CD8-positive, alpha-beta T cell (primary cell): ENCODE measurements at regions of chr22 and their contacts with region 1.

Region 1: GRCh38 chr22:22349455-22349836 is 104.9 kb downstream of the VPREB1 start:
- DNase-seq: no peak
- ATAC-seq: no peak
- H3K4me3 ChIP-seq: no peak overlapping the region
- H3K4me3 Mint-ChIP-seq: no peak overlapping the region
- H3K27ac ChIP-seq: no peak overlapping the region
- H3K27ac Mint-ChIP-seq: no peak overlapping the region
- H3K4me1 ChIP-seq: no peaks in the 10 kb centered on the region
- H3K4me1 Mint-ChIP-seq: no peaks in the 10 kb centered on the region
- H3K27me3 ChIP-seq: no peaks in the 10 kb centered on the region
- H3K27me3 Mint-ChIP-seq: peaks cover 19% of the 10 kb centered on the region
- CTCF ChIP-seq: no peak

Region 2: DNA sequence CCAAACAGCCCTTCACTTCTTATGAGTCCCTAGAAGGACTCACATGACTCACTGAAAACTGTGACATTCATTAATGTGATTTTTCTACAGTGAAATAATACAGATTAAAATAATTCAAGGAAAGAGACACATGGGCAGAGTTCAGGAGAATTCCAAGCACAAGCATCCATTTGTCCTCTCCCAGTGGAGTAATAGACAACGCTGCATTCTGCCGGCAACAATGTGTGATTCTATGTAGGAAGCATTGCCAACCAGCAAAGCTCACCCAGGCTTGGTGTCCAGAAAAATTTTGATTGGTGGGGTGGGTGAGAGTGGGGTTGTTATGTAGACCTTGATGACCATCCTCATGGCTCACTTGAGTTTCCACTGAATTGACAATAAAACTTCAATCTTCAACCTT is 19.1 kb after region 1 on chr22:
- CTCF ChIA-PET with region 1: no interaction called
- POLR2A ChIA-PET with region 1: no interaction called
- intact Hi-C with region 1: no loop called
- DNase-seq: no peak
- ATAC-seq: no peak
- H3K4me3 ChIP-seq: no peak overlapping the region
- H3K4me3 Mint-ChIP-seq: no peak overlapping the region
- H3K27ac ChIP-seq: no peak overlapping the region
- H3K27ac Mint-ChIP-seq: no peak overlapping the region
- H3K4me1 ChIP-seq: no peaks in the 10 kb centered on the region
- H3K4me1 Mint-ChIP-seq: no peaks in the 10 kb centered on the region
- H3K27me3 ChIP-seq: no peaks in the 10 kb centered on the region
- H3K27me3 Mint-ChIP-seq: peaks cover 36% of the 10 kb centered on the region
- CTCF ChIP-seq: no peak

Region 3: GRCh38 chr22:22397277-22397870 is 47.9 kb after region 1 on chr22:
- CTCF ChIA-PET with region 1: interaction called, 3 read pairs
- POLR2A ChIA-PET with region 1: no interaction called
- intact Hi-C with region 1: loop called in 1 of 2 experiments (anchors 1 kb)
- DNase-seq: no peak
- ATAC-seq: no peak
- H3K4me3 ChIP-seq: no peak overlapping the region
- H3K4me3 Mint-ChIP-seq: no peak overlapping the region
- H3K27ac ChIP-seq: no peak overlapping the region
- H3K27ac Mint-ChIP-seq: no peak overlapping the region
- H3K4me1 ChIP-seq: no peaks in the 10 kb centered on the region
- H3K4me1 Mint-ChIP-seq: no peaks in the 10 kb centered on the region
- H3K27me3 ChIP-seq: no peaks in the 10 kb centered on the region
- H3K27me3 Mint-ChIP-seq: peaks cover 8% of the 10 kb centered on the region
- CTCF ChIP-seq: no peak